Colonic mucosa (tissue), 4 donors: ENCODE measurements at regions of chr16 and their contacts with region 1.

Region 1: GRCh38 chr16:4244254-4245076 is 2.6 kb upstream of the SRL start:
- DNase-seq: no peak
- H3K4me3 ChIP-seq: no peak overlapping the region
- H3K27ac ChIP-seq: no peak overlapping the region
- H3K4me1 ChIP-seq: no peaks in the 10 kb centered on the region
- H3K27me3 ChIP-seq: no peaks in the 10 kb centered on the region
- CTCF ChIP-seq: no peak

Region 2: GRCh38 chr16:3988824-3989223 is 255.6 kb before region 1 on chr16:
- intact Hi-C with region 1: loop called (anchors 5 kb)
- DNase-seq: no peak
- H3K4me3 ChIP-seq: no peak overlapping the region
- H3K27ac ChIP-seq: no peak overlapping the region
- H3K4me1 ChIP-seq: no peaks in the 10 kb centered on the region
- H3K27me3 ChIP-seq: no peaks in the 10 kb centered on the region
- CTCF ChIP-seq: no peak

Region 3: DNA sequence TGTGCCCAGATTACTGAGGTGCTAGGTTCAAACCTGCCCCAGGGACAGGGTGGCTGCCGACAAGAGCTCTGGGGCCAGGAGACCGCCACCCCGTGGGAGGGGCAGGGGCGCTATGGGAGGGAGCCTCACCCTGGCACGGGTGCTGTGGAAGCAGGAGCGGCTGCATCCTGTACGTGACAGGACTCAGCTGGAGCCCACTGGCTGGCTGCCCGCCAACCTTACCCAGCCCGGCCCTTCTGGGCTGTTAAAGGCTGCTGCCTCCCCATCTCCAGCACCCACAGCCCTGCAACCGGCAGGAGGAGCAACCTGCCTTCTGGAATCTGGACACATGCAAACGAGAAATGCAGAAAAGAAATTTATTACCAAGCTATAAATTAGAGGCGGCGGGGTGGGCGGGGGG is 95.4 kb after region 1 on chr16:
- intact Hi-C with region 1: no loop called
- DNase-seq: no peak
- H3K4me3 ChIP-seq: no peak overlapping the region
- H3K27ac ChIP-seq: no peak overlapping the region
- H3K4me1 ChIP-seq: no peaks in the 10 kb centered on the region
- H3K27me3 ChIP-seq: no peaks in the 10 kb centered on the region
- CTCF ChIP-seq: no peak